ENCODE measurements at regions of chr12 and their contacts with region 1.

Region 1: DNA sequence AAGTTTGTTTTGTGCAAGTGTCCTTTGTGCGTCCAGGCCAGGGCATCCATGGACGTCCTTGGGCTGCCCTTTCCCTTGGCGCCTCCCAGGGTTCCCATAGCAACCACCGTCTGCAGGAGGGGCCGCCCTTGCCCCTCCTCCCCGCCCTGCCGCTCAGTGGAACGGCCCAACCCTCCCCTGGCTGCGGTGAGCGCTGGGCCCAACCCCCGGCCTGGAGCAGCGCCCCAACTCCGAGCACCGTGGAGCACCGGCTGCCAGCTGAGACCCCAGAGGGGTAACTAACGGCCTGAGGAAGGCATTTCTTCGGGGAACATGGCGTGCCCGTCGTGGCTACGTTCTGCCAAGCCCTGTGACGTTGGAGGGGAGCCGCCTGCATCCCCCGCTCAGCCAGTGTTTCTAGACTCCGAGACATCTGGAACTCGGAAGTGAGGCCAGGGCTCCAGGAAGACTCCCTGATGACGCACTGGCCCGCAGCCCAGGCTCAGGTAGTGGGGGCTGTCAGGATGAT is 5.3 kb upstream of the ACACB start:
- DNase-seq: peak; percentile 7 to 65 (median 28)
- ATAC-seq: peak; percentile 85 to 91 (median 86)
- H3K4me3 ChIP-seq: peak overlapping the region; percentile 28 to 62
- H3K4me3 Mint-ChIP-seq: peak overlapping the region; percentile 79 to 81 (median 81)
- H3K27ac ChIP-seq: peak overlapping the region; percentile 57
- H3K27ac Mint-ChIP-seq: peak overlapping the region; percentile 80 to 83
- H3K4me1 ChIP-seq: peaks cover 0 to 12% of the 10 kb centered on the region in 2 experiments
- H3K4me1 Mint-ChIP-seq: peaks cover 13 to 34% (median 30%) of the 10 kb centered on the region in 3 donors
- H3K27me3 ChIP-seq: no peaks in the 10 kb centered on the region
- H3K27me3 Mint-ChIP-seq: no peaks in the 10 kb centered on the region

Region 2: GRCh38 chr12:108642899-108643654 is 468.0 kb before region 1 on chr12:
- CTCF ChIA-PET with region 1: no interaction called
- POLR2A ChIA-PET with region 1: no interaction called
- DNase-seq: no peak
- ATAC-seq: no peak
- H3K4me3 ChIP-seq: no peak overlapping the region
- H3K4me3 Mint-ChIP-seq: no peak overlapping the region
- H3K27ac ChIP-seq: no peak overlapping the region
- H3K27ac Mint-ChIP-seq: no peak overlapping the region
- H3K4me1 ChIP-seq: peaks cover 17 to 30% of the 10 kb centered on the region in 2 experiments
- H3K4me1 Mint-ChIP-seq: peaks cover 32 to 53% (median 45%) of the 10 kb centered on the region in 3 donors
- H3K27me3 ChIP-seq: no peaks in the 10 kb centered on the region
- H3K27me3 Mint-ChIP-seq: no peaks in the 10 kb centered on the region

Region 3: DNA sequence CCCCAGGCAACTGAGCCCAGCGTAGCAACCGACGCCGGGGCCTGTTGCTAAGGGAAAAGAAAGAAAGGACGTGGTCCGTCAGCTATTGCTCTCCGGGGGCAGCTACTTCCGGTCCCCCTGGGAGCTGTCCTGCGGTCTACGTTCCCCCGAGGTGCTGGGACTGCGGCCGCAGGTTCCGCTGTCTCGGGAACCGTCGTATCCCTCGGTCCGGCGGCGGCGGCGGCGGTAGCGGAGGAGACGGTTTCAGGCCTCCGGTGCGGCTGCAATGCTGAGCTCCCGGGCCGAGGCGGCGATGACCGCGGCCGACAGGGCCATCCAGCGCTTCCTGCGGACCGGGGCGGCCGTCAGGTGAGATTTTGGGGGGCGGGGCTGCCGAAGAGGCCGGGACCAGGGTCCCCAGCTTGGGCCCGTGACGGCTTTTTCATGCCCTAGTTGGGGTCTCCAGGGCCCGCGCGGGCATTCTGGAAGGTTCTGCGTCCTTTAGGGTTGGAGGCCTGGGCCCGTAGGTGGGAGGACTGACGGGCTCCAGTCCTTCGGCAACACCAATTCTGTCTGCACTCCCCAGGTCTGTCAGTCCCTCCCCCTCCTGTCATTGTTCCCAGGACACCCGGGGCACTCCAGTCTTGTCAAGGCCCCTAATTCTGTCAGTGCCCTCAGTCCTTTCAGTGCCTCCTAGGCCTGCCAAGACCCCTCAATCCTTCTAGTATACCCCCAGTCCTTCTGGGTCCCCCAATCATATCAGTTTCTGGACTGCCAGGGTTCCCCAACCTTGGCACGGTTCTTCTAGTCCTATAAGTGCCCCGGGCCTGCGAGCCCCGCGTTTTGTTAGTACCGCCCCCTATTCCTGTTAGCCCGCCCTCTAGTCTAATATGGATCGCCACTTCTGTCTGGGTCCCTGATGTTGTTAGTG is 58.4 kb before region 1 on chr12 and contains the start of gene USP30:
- CTCF ChIA-PET with region 1: interaction called in 1 of 2 experiments, 4 read pairs
- POLR2A ChIA-PET with region 1: interaction called in 1 of 2 experiments, 11 read pairs
- DNase-seq: peak; percentile 69 to 92 (median 81)
- ATAC-seq: peak; percentile 81 to 90 (median 84)
- H3K4me3 ChIP-seq: peak within 1 kb of the TSS; percentile 97 to 99
- H3K4me3 Mint-ChIP-seq: peak within 1 kb of the TSS; percentile 86 to 98 (median 90)
- H3K27ac ChIP-seq: peak within 1 kb of the TSS; percentile 92
- H3K27ac Mint-ChIP-seq: peak within 1 kb of the TSS; percentile 93
- H3K4me1 ChIP-seq: peaks cover 6 to 16% of the 10 kb centered on the region in 2 experiments
- H3K4me1 Mint-ChIP-seq: peaks cover 12 to 31% (median 19%) of the 10 kb centered on the region in 3 donors
- H3K27me3 ChIP-seq: no peaks in the 10 kb centered on the region
- H3K27me3 Mint-ChIP-seq: no peaks in the 10 kb centered on the region
- total RNA-seq, gene USP30: 9.8 to 20.9 (median 13.9) TPM

Region 4: GRCh38 chr12:109100741-109101140 is 10.3 kb before region 1 on chr12:
- CTCF ChIA-PET with region 1: interaction called, 6 to 11 read pairs
- POLR2A ChIA-PET with region 1: interaction called in 1 of 2 experiments, 4 read pairs
- DNase-seq: no peak
- ATAC-seq: no peak
- H3K4me3 ChIP-seq: no peak overlapping the region
- H3K4me3 Mint-ChIP-seq: no peak overlapping the region
- H3K27ac ChIP-seq: no peak overlapping the region
- H3K27ac Mint-ChIP-seq: peak overlapping the region in 1 of 2 donors; percentile 89
- H3K4me1 ChIP-seq: peaks cover 4 to 31% of the 10 kb centered on the region in 2 experiments
- H3K4me1 Mint-ChIP-seq: peaks cover 26 to 32% (median 30%) of the 10 kb centered on the region in 3 donors
- H3K27me3 ChIP-seq: no peaks in the 10 kb centered on the region
- H3K27me3 Mint-ChIP-seq: no peaks in the 10 kb centered on the region

Region 5: GRCh38 chr12:109385339-109386067 is 274.5 kb after region 1 on chr12:
- CTCF ChIA-PET with region 1: interaction called, 4 to 12 read pairs
- POLR2A ChIA-PET with region 1: no interaction called
- DNase-seq: peak in 1 of 35 experiments; percentile 37
- ATAC-seq: no peak
- H3K4me3 ChIP-seq: no peak overlapping the region
- H3K4me3 Mint-ChIP-seq: no peak overlapping the region
- H3K27ac ChIP-seq: no peak overlapping the region
- H3K27ac Mint-ChIP-seq: peak overlapping the region in 1 of 2 donors; percentile 24
- H3K4me1 ChIP-seq: no peaks in the 10 kb centered on the region
- H3K4me1 Mint-ChIP-seq: no peaks in the 10 kb centered on the region
- H3K27me3 ChIP-seq: peaks cover 0 to 8% of the 10 kb centered on the region in 2 experiments
- H3K27me3 Mint-ChIP-seq: peaks cover 28 to 30% of the 10 kb centered on the region in 2 donors

Region 6: GRCh38 chr12:109393437-109394345 is 282.6 kb after region 1 on chr12:
- CTCF ChIA-PET with region 1: interaction called, 3 to 10 read pairs
- POLR2A ChIA-PET with region 1: no interaction called
- DNase-seq: peak in 26 of 35 experiments; percentile 1 to 69 (median 14)
- ATAC-seq: peak; percentile 42 to 72 (median 56)
- H3K4me3 ChIP-seq: no peak overlapping the region
- H3K4me3 Mint-ChIP-seq: no peak overlapping the region
- H3K27ac ChIP-seq: no peak overlapping the region
- H3K27ac Mint-ChIP-seq: no peak overlapping the region
- H3K4me1 ChIP-seq: no peaks in the 10 kb centered on the region
- H3K4me1 Mint-ChIP-seq: no peaks in the 10 kb centered on the region
- H3K27me3 ChIP-seq: peaks cover 0 to 20% of the 10 kb centered on the region in 2 experiments
- H3K27me3 Mint-ChIP-seq: peaks cover 22 to 23% of the 10 kb centered on the region in 2 donors